Dorsolateral prefrontal cortex (tissue), 120 donors: ENCODE measurements at regions of chr7 and their contacts with region 1.

Region 1: GRCh38 chr7:18570890-18571478 is 75.4 kb downstream of the HDAC9 start:
- DNase-seq: no peak
- H3K4me3 ChIP-seq: no peak overlapping the region
- H3K27ac ChIP-seq: no peak overlapping the region
- H3K27me3 ChIP-seq: no peaks in the 10 kb centered on the region
- CTCF ChIP-seq: peak; percentile 21 to 86 (median 68)

Region 2: DNA sequence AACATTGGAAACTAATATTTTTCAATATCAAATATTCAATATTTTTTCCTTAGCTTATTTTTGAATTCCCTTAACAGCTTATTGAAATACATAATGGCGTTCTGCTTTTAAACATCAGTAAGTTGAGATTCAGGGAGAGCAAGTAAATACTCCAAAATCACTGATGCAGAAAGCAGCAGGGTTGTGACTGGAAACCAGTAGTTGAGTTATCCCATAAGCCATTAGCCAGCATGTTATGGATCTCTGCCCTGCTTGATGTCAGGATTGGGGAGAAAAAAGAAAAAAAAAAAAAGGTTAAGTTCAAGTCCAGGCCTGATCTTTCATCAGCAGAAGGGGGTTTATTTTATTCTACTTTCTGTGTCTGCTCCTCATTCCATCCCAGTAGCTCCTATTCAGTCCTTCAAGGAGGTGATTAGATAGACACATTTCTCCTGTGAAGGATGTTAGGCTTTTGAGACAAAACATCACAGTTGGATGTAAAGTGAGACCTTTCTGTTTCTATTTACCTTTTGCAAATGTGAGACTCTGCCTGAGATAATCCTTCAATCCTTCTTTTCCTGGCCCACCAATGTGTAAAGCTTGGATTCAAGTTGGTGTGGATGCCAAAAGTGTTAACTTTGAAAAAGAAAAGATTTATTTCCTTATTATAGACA is 186.4 kb before region 1 on chr7:
- intact Hi-C with region 1: loop called in 1 of 2 experiments (anchors 10 kb)
- DNase-seq: no peak
- H3K4me3 ChIP-seq: no peak overlapping the region
- H3K27ac ChIP-seq: no peak overlapping the region
- H3K27me3 ChIP-seq: no peaks in the 10 kb centered on the region
- CTCF ChIP-seq: no peak

Region 3: GRCh38 chr7:18495412-18496340 is 75.3 kb before region 1 on chr7 and contains the start of gene HDAC9:
- intact Hi-C with region 1: loop called (anchors 5 kb)
- DNase-seq: peak in 9 of 10 donors; percentile 58 to 82 (median 67)
- H3K4me3 ChIP-seq: peak within 1 kb of the TSS; percentile 36 to 82 (median 62)
- H3K27ac ChIP-seq: peak within 1 kb of the TSS; percentile 52 to 95 (median 88)
- H3K27me3 ChIP-seq: no peaks in the 10 kb centered on the region
- CTCF ChIP-seq: peak in 4 of 56 donors; percentile 3 to 8 (median 4)
- total RNA-seq, gene HDAC9: 40.3 to 96.7 (median 63.1) TPM